Panc1 (cell line): ENCODE measurements at regions of chr10 and their contacts with region 1.

Region 1: GRCh38 chr10:101161494-101162299 is 30.6 kb downstream of the TLX1 start:
- DNase-seq: peak; percentile 72
- ATAC-seq: peak; percentile 96
- H3K4me3 ChIP-seq: peak overlapping the region; percentile 30 to 62
- H3K27ac ChIP-seq: no peak overlapping the region
- H3K4me1 ChIP-seq: peaks cover 12% of the 10 kb centered on the region; the same call in 1 of the 2 replicates
- H3K27me3 ChIP-seq: peaks cover 19% of the 10 kb centered on the region
- CTCF ChIP-seq: peak; percentile 98

Region 2: GRCh38 chr10:100743626-100744135 is 418.0 kb before region 1 on chr10:
- CTCF ChIA-PET with region 1: no interaction called
- POLR2A ChIA-PET with region 1: no interaction called
- in situ Hi-C with region 1: no loop called
- intact Hi-C with region 1: no loop called
- DNase-seq: no peak
- ATAC-seq: peak; percentile 49
- H3K4me3 ChIP-seq: peak overlapping the region; percentile 58 to 67
- H3K27ac ChIP-seq: peak overlapping the region; percentile 99
- H3K4me1 ChIP-seq: peaks cover 44% of the 10 kb centered on the region
- H3K27me3 ChIP-seq: no peaks in the 10 kb centered on the region
- CTCF ChIP-seq: peak; percentile 97

Region 3: DNA sequence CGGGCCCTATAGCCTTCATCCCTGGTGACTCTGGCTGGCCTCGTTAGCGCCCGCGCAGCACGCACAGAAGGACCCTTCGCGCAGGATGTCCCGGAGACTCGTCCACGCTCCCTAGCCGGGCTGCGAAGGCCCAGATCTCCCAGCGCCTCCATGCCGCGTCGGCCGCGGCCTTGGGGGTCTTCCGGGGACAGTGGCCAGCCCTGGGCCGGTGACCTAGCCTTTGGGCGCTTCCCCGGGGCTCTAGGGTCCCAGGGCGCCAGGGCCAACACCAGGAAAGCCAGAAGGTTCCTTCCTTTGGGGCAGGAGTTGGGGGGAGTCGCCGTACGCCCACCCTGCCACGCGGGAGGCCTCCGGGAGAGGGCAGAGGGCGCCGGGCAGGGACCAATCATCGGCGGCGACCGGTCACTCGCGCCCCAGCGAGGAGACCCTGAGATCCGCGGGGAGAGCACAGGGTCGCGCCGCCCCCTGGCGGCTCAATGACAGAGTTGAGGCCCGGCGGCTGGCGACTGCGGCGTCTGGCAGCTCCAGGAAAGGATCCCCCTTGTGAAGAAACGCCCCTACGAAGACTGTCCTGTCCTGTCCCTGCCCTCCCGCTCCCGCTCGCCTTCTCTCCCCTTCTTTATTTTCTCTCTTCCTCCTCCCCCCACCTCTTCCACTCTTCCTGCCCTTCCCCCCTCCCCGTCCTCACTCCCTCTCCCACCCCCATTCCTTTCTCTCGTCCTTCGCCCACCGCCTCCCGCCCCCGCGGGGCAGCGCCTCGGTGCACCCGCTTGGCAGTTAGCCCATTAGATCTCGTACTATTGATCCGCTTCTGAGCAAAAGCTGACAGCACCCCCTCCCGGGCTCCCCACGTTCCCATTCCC is 129.9 kb after region 1 on chr10:
- CTCF ChIA-PET with region 1: interaction called, 3 read pairs
- POLR2A ChIA-PET with region 1: no interaction called
- in situ Hi-C with region 1: loop called (anchors 25 kb)
- intact Hi-C with region 1: loop called (anchors 5 kb)
- DNase-seq: no peak
- ATAC-seq: peak; percentile 88
- H3K4me3 ChIP-seq: peak overlapping the region; percentile 43 to 56
- H3K27ac ChIP-seq: no peak overlapping the region
- H3K4me1 ChIP-seq: no peaks in the 10 kb centered on the region
- H3K27me3 ChIP-seq: peaks cover 2% of the 10 kb centered on the region; the same call in 1 of the 2 replicates
- CTCF ChIP-seq: peak; percentile 95